Calu3 (cell line): ENCODE measurements at regions of chr1 and their contacts with region 1.

Region 1: GRCh38 chr1:94463765-94464330 is 45.7 kb downstream of the ABCD3 start:
- DNase-seq: peak; percentile 34
- H3K4me3 Mint-ChIP-seq: no peak overlapping the region
- H3K27ac Mint-ChIP-seq: peak overlapping the region; percentile 13
- H3K4me1 Mint-ChIP-seq: peaks cover 25% of the 10 kb centered on the region
- H3K27me3 Mint-ChIP-seq: no peaks in the 10 kb centered on the region
- CTCF ChIP-seq: peak; percentile 63

Region 2: GRCh38 chr1:94025383-94026340 is 438.2 kb before region 1 on chr1:
- CTCF ChIA-PET with region 1: interaction called, 3 read pairs
- intact Hi-C with region 1: loop called (anchors 1 kb)
- DNase-seq: peak; percentile 54
- H3K4me3 Mint-ChIP-seq: peak overlapping the region; percentile 32
- H3K27ac Mint-ChIP-seq: no peak overlapping the region
- H3K4me1 Mint-ChIP-seq: peaks cover 33% of the 10 kb centered on the region
- H3K27me3 Mint-ChIP-seq: peaks cover 10% of the 10 kb centered on the region
- CTCF ChIP-seq: no peak

Region 3: DNA sequence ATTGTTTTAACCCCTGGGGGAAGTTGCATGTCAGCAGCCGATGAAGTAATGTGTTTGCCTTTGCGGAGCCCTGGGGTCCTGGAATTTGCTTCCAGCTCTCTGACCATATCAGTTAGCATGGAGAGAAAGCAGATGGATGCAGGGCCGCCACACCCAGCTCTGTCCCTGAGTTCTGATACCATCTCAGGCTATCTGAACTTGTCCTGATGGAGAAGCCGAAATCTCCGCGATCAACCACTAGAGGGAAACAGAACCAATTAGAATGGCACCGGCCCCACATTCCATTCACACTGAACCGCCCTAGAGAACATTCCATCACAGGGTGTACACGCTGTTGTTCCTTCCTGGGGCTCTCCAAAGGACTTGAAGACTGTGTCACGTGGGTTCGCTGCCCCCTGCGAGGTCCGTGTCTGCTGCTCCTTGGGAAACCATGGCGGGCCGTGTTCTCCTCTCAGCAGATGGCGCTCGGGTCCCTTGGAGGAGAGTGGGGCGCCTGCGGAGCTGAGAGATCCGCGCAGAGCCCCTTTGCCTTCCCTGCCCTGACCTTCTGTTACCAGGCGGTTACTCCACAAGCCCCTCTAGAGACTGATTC is 418.3 kb before region 1 on chr1:
- CTCF ChIA-PET with region 1: interaction called, 14 read pairs
- intact Hi-C with region 1: no loop called
- DNase-seq: peak; percentile 89
- H3K4me3 Mint-ChIP-seq: peak overlapping the region; percentile 47
- H3K27ac Mint-ChIP-seq: peak overlapping the region; percentile 83
- H3K4me1 Mint-ChIP-seq: peaks cover 15% of the 10 kb centered on the region
- H3K27me3 Mint-ChIP-seq: no peaks in the 10 kb centered on the region
- CTCF ChIP-seq: no peak

Region 4: GRCh38 chr1:94228640-94229375 is 235.0 kb before region 1 on chr1:
- CTCF ChIA-PET with region 1: no interaction called
- intact Hi-C with region 1: loop called (anchors 10 kb)
- DNase-seq: no peak
- H3K4me3 Mint-ChIP-seq: no peak overlapping the region
- H3K27ac Mint-ChIP-seq: no peak overlapping the region
- H3K4me1 Mint-ChIP-seq: peaks cover 25% of the 10 kb centered on the region
- H3K27me3 Mint-ChIP-seq: no peaks in the 10 kb centered on the region
- CTCF ChIP-seq: no peak

Region 5: DNA sequence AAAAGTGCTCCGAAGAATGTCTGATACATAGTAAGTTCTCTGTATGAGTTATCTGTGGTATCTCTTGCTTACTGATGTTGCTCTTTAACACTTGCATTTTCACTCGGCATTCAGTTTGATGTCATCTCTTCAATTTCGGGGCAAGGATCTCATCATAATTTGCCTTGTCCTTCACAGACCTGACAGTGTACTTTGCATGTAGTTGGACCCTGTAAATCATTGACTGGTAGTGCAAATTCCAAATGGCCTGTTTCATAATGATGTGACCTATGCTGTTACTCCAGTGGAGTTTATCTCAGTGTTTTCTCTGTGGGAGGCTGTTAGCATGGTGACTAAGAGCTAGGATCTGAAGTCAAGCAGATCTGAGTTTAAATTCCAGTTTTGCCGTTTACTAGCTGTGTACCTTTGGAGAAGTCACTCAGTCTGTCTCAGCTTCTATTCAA is 79.9 kb before region 1 on chr1:
- CTCF ChIA-PET with region 1: interaction called, 4 read pairs
- intact Hi-C with region 1: loop called (anchors 5 kb)
- DNase-seq: peak; percentile 61
- H3K4me3 Mint-ChIP-seq: peak overlapping the region; percentile 31
- H3K27ac Mint-ChIP-seq: peak overlapping the region; percentile 90
- H3K4me1 Mint-ChIP-seq: peaks cover 44% of the 10 kb centered on the region
- H3K27me3 Mint-ChIP-seq: no peaks in the 10 kb centered on the region
- CTCF ChIP-seq: no peak

Region 6: DNA sequence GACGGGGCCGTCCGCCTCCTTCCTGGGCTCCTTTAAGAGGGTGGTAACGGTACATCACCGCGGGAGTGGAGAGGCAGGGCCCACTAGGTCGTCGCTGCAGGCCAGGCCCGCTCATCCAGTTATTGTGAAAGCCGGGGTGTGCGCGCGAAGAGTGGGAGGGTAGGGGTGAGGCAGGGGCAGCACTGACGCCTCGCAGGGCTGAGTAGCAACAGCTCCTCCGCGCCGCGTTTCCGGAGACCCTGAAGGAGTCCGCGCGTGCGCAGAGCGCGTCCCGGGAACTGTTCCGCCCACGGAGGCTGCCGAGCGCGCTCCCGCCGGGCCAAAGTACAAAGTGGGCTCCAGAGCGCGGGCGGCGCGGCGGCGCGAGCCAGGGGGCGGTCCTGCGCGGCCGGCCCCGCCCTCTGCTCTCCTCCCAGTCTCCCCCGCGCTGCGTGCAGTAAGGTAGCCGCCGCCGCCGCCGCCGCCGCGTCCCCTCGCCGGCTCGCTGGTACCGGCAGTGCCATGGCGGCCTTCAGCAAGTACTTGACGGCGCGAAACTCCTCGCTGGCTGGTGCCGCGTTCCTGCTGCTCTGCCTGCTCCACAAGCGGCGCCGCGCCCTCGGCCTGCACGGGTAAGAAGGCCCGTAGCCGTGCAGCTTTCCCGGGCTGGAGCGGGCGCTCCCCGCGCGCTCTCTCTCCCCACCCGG is 45.7 kb before region 1 on chr1 and contains the start of gene ABCD3:
- CTCF ChIA-PET with region 1: interaction called, 4 read pairs
- intact Hi-C with region 1: loop called (anchors 5 kb)
- DNase-seq: peak; percentile 97
- H3K4me3 Mint-ChIP-seq: no peak within 1 kb of the TSS
- H3K27ac Mint-ChIP-seq: no peak within 1 kb of the TSS
- H3K4me1 Mint-ChIP-seq: peaks cover 44% of the 10 kb centered on the region
- H3K27me3 Mint-ChIP-seq: no peaks in the 10 kb centered on the region
- CTCF ChIP-seq: no peak
- total RNA-seq, gene ABCD3: 51.0 and 59.3 TPM in 2 replicates

Region 7: DNA sequence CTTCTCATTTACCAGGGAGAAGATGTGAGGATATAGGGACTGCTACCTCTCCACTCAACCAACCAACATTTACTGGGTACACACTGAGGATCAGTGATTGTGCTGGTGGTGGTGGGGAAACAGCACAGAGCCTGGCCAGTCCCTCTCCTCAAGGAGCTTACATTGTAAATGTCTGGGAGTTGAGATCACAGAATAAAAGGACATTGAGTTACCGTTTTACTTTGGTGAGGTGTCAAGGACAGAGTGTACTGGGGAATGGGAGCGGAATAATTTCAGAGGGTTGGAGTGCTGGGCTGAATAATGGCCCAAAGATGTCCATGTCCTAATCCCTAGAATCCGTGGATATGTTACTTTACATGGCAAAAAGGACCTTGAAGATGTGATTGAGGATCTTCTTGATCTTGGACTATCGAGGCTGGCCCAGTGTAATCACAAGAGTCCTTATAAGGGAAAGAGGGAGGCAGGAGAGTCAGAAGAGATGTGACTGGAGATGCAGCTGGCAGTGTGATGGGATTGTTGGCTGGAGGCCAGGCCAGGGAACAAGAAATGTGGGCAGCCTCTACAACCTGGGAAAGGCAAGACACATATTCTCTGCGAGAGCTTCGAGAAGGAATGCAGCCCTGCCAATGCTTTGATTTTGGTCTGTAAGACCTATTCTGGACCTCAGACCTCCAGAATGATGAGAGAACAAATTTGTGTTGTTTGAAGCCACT is 743.5 kb after region 1 on chr1:
- CTCF ChIA-PET with region 1: no interaction called
- intact Hi-C with region 1: no loop called
- DNase-seq: no peak
- H3K4me3 Mint-ChIP-seq: no peak overlapping the region
- H3K27ac Mint-ChIP-seq: no peak overlapping the region
- H3K4me1 Mint-ChIP-seq: no peaks in the 10 kb centered on the region
- H3K27me3 Mint-ChIP-seq: no peaks in the 10 kb centered on the region
- CTCF ChIP-seq: no peak